ENCODE measurements at regions of chr14 and their contacts with region 1.

Region 1: GRCh38 chr14:22131749-22132476 is 457.1 kb downstream of the DAD1 start:
- DNase-seq: no peak
- H3K4me3 ChIP-seq: no peak overlapping the region
- H3K27ac ChIP-seq: no peak overlapping the region
- H3K27me3 ChIP-seq: peaks cover 2% of the 10 kb centered on the region
- CTCF ChIP-seq: peak; percentile 54

Region 2: GRCh38 chr14:21860172-21860571 is 271.7 kb before region 1 on chr14:
- CTCF ChIA-PET with region 1: no interaction called
- POLR2A ChIA-PET with region 1: no interaction called
- DNase-seq: no peak
- H3K4me3 ChIP-seq: no peak overlapping the region
- H3K27ac ChIP-seq: no peak overlapping the region
- H3K27me3 ChIP-seq: no peaks in the 10 kb centered on the region
- CTCF ChIP-seq: peak; percentile 28

Region 3: DNA sequence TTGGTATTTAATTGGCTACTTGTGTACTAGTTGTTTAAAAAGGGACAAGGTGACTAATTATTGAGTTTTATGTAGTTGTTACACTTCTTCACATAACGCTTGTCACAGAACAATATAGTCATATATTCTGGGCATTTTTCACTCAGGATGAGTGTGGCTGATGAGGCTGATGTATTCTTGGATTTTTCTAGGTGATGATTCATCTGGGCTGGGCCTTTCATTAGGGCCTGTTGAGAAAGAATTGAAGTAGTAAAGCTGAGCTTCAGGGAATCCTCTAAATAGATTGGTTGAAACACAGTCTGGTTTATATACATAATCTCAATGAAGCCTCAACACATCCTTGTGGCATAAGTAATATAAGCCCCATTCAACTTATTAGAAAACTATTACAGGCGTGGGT is 11.4 kb after region 1 on chr14:
- CTCF ChIA-PET with region 1: interaction called, 12 read pairs
- POLR2A ChIA-PET with region 1: no interaction called
- DNase-seq: no peak
- H3K4me3 ChIP-seq: no peak overlapping the region
- H3K27ac ChIP-seq: no peak overlapping the region
- H3K27me3 ChIP-seq: peaks cover 22% of the 10 kb centered on the region
- CTCF ChIP-seq: no peak

Measured in AG04450 (cell line).